Tibial artery (tissue), 4 donors: ENCODE measurements at regions of chr12 and their contacts with region 1.

Region 1: DNA sequence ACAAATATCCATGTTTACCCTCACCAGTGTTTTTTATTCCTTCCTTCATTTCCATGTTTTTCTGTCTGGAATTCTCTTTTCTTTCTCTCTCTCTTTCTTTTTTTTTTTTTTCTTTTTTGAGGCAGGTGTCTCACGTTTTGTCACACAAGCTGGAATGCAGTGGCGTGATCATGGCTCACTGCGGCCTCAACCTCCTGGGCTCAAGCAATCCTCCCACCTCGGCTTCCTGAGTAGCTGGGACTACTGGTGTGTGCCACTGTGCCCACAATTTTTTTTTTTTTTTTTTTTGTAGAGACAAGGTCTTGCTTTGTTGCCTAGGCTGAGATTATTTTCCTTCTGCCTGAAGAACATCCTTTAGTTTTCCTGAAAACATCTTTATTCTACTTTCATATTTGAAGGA is 15.0 kb upstream of the AMIGO2 start:
- DNase-seq: no peak
- H3K4me3 ChIP-seq: no peak overlapping the region
- H3K27ac ChIP-seq: peak overlapping the region in 1 of 2 donors; percentile 10
- H3K4me1 ChIP-seq: peaks cover 0 to 60% (median 14%) of the 10 kb centered on the region in 4 donors
- H3K27me3 ChIP-seq: no peaks in the 10 kb centered on the region
- CTCF ChIP-seq: no peak

Region 2: DNA sequence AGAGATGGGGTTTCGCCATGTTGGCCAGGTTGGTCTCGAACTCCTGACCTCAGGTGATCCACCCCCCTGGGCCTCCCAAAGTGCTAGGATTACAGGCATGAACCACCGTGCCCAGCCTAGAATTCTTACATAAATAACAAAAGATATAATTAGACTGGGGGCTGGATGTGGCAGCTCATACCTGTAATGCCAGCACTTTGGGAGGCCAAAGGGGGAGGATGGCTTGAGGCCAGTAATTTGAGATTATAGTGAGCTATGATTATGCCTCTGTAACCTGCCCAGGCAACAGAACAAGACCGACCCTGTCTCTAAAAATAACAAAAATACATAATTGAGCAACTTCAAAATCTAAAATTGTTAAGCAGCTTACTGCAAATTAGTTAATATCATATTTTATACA is 1234.9 kb before region 1 on chr12:
- intact Hi-C with region 1: loop called (anchors 5 kb)
- DNase-seq: no peak
- H3K4me3 ChIP-seq: no peak overlapping the region
- H3K27ac ChIP-seq: no peak overlapping the region
- H3K4me1 ChIP-seq: peaks cover 0 to 25% (median 0%) of the 10 kb centered on the region in 4 donors
- H3K27me3 ChIP-seq: no peaks in the 10 kb centered on the region
- CTCF ChIP-seq: no peak

Region 3: DNA sequence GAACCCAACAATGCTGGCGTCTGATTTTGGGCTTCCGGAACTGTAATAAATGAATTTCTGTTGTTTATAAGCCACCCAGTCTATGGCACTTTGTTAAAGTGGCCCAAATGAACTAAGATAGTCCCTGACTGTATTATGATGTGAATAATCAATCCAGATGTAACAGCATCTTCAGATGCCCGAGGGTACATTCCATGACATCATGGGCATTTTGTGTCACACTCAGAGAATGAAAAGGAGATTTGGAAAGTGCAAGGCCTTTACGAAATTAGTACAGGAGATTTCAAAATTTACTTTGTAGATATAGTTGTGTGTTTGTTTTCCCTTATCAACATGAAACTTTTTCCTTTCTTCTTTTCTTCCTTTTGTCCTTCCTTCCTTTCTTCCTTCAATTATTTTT is 39.2 kb after region 1 on chr12:
- intact Hi-C with region 1: no loop called
- DNase-seq: no peak
- H3K4me3 ChIP-seq: no peak overlapping the region
- H3K27ac ChIP-seq: no peak overlapping the region
- H3K4me1 ChIP-seq: peaks cover 0 to 11% (median 2%) of the 10 kb centered on the region in 4 donors
- H3K27me3 ChIP-seq: no peaks in the 10 kb centered on the region
- CTCF ChIP-seq: no peak

Region 4: GRCh38 chr12:47164724-47165439 is 70.1 kb after region 1 on chr12:
- intact Hi-C with region 1: no loop called
- DNase-seq: no peak
- H3K4me3 ChIP-seq: no peak overlapping the region
- H3K27ac ChIP-seq: no peak overlapping the region
- H3K4me1 ChIP-seq: no peaks in the 10 kb centered on the region
- H3K27me3 ChIP-seq: no peaks in the 10 kb centered on the region
- CTCF ChIP-seq: no peak

Region 5: DNA sequence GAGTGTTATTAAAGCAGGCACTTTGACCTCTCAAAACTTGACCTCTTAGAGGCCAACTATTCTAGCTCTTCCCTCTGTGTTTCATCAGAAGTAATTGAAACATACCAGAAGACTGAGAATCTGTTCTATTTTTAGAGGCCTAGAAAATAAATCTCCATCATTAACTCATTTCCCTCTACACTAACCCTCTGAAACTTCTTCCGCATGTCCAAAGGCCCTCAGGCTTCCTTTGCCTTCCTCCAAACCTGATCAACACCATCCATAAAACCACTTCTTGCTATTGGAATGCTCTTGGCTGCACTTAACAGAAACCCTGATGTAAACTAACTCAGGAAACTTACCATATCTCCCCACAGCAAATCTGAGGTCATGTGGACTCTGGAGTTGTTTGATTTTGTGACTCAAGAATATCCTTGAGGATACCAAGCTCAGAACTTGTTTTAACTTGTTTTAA is 414.6 kb after region 1 on chr12:
- intact Hi-C with region 1: no loop called
- DNase-seq: no peak
- H3K4me3 ChIP-seq: no peak overlapping the region
- H3K27ac ChIP-seq: peak overlapping the region in 1 of 2 donors; percentile 27
- H3K4me1 ChIP-seq: peaks cover 0 to 23% (median 6%) of the 10 kb centered on the region in 4 donors
- H3K27me3 ChIP-seq: no peaks in the 10 kb centered on the region
- CTCF ChIP-seq: no peak